CD4-positive, alpha-beta T cell (primary cell): ENCODE measurements at regions of chr7 and their contacts with region 1.

Region 1: DNA sequence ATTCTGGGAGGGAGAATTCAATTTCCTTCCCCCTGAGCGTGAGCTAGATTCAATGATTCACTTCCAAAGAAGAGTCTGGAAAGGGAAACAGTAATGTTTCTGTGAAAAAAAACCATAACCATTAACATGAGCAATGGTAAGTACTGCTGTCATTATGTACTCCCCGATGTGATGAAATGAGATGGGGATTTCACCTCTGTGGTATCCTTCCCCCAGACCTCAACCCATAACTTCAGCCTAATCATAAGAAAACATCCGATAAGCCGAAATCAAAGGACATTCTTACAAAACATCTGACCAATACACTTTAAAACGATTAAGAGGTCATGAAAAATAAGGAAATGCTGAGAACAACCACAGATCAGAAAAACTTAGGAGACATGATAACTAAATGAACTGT is 27.2 kb downstream of the EZH2 start:
- DNase-seq: peak in 2 of 14 experiments; percentile 58 to 68
- ATAC-seq: no peak
- H3K4me3 ChIP-seq: no peak overlapping the region
- H3K4me3 Mint-ChIP-seq: no peak overlapping the region
- H3K27ac ChIP-seq: no peak overlapping the region
- H3K27ac Mint-ChIP-seq: no peak overlapping the region
- H3K4me1 ChIP-seq: peaks cover 6% of the 10 kb centered on the region
- H3K4me1 Mint-ChIP-seq: peaks cover 17% of the 10 kb centered on the region
- H3K27me3 ChIP-seq: no peaks in the 10 kb centered on the region
- H3K27me3 Mint-ChIP-seq: no peaks in the 10 kb centered on the region
- CTCF ChIP-seq: no peak

Region 2: DNA sequence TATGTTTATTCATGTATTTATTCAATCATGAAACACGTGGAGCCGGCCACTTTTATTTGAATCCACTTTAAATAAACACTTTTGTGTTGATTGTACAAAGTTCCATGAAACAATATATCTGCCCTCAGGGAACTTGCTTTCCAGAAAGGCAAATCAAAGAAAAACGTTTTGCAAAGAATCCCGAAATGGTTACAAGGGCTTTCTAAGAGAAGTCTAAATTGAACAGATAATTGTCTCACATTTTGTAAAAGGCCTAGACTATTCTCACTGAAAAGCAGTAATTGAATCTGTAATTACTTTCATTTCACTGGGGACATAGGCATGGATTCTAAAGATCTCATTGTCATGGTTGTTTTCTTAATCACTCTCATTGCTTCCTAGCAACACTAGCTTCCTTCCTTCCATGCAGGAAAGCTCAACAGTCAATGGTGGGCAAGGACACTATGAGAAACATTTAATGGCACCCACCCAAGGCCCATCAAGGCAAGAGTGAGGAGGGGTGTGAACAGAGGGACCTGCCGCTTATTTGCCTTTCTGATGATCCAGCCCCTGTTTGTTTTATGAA is 888.8 kb before region 1 on chr7:
- CTCF ChIA-PET with region 1: no interaction called
- POLR2A ChIA-PET with region 1: no interaction called
- intact Hi-C with region 1: no loop called
- DNase-seq: no peak
- ATAC-seq: no peak
- H3K4me3 ChIP-seq: no peak overlapping the region
- H3K4me3 Mint-ChIP-seq: no peak overlapping the region
- H3K27ac ChIP-seq: no peak overlapping the region
- H3K27ac Mint-ChIP-seq: no peak overlapping the region
- H3K4me1 ChIP-seq: no peaks in the 10 kb centered on the region
- H3K4me1 Mint-ChIP-seq: no peaks in the 10 kb centered on the region
- H3K27me3 ChIP-seq: no peaks in the 10 kb centered on the region
- H3K27me3 Mint-ChIP-seq: peaks cover 6% of the 10 kb centered on the region
- CTCF ChIP-seq: no peak

Region 3: GRCh38 chr7:148575640-148576411 is 281.1 kb before region 1 on chr7:
- CTCF ChIA-PET with region 1: interaction called, 3 read pairs
- POLR2A ChIA-PET with region 1: no interaction called
- intact Hi-C with region 1: loop called in 1 of 2 experiments (anchors 5 kb)
- DNase-seq: peak; percentile 50 to 79 (median 64)
- ATAC-seq: peak; percentile 81
- H3K4me3 ChIP-seq: no peak overlapping the region
- H3K4me3 Mint-ChIP-seq: no peak overlapping the region
- H3K27ac ChIP-seq: no peak overlapping the region
- H3K27ac Mint-ChIP-seq: no peak overlapping the region
- H3K4me1 ChIP-seq: peaks cover 5% of the 10 kb centered on the region
- H3K4me1 Mint-ChIP-seq: peaks cover 4% of the 10 kb centered on the region
- H3K27me3 ChIP-seq: no peaks in the 10 kb centered on the region
- H3K27me3 Mint-ChIP-seq: no peaks in the 10 kb centered on the region
- CTCF ChIP-seq: peak; percentile 82

Region 4: GRCh38 chr7:148800677-148801076 is 56.2 kb before region 1 on chr7:
- CTCF ChIA-PET with region 1: no interaction called
- POLR2A ChIA-PET with region 1: no interaction called
- intact Hi-C with region 1: no loop called
- DNase-seq: no peak
- ATAC-seq: no peak
- H3K4me3 ChIP-seq: no peak overlapping the region
- H3K4me3 Mint-ChIP-seq: no peak overlapping the region
- H3K27ac ChIP-seq: no peak overlapping the region
- H3K27ac Mint-ChIP-seq: no peak overlapping the region
- H3K4me1 ChIP-seq: no peaks in the 10 kb centered on the region
- H3K4me1 Mint-ChIP-seq: no peaks in the 10 kb centered on the region
- H3K27me3 ChIP-seq: no peaks in the 10 kb centered on the region
- H3K27me3 Mint-ChIP-seq: no peaks in the 10 kb centered on the region
- CTCF ChIP-seq: no peak

Region 5: DNA sequence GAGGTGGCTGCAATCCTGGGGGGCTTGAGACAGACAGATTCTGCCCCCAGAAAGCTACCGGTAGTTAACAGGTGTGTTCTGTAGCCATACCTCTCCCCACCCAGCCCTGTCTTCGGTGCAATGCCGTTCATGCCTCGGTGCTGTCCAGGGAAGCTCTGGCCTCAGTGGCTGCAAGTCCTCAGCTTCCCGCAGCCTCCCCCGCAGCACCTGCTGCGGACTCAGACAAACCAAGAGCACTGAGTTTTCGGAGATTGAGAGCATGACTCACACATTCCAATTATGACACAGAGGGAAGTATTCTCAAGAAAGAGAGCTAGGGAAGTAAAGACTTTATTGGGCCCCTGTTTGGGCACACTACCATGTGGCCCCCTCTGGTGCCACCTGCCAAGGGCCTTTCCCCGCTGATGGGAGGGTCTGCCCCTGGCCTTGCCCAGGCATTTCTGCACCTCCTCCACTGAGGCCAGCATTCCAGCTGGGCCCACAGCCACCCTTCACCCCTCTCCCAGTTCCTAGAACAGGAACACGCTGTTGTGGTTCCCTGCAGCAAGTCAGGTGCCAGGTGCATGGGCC is 57.4 kb after region 1 on chr7:
- CTCF ChIA-PET with region 1: interaction called, 8 read pairs
- POLR2A ChIA-PET with region 1: no interaction called
- intact Hi-C with region 1: loop called in 1 of 2 experiments (anchors 2 kb)
- DNase-seq: peak in 3 of 14 experiments; percentile 17 to 34 (median 27)
- ATAC-seq: peak; percentile 19
- H3K4me3 ChIP-seq: no peak overlapping the region
- H3K4me3 Mint-ChIP-seq: peak overlapping the region; percentile 51
- H3K27ac ChIP-seq: peak overlapping the region; percentile 18 to 57
- H3K27ac Mint-ChIP-seq: peak overlapping the region; percentile 79
- H3K4me1 ChIP-seq: peaks cover 49% of the 10 kb centered on the region
- H3K4me1 Mint-ChIP-seq: peaks cover 65% of the 10 kb centered on the region
- H3K27me3 ChIP-seq: no peaks in the 10 kb centered on the region
- H3K27me3 Mint-ChIP-seq: no peaks in the 10 kb centered on the region
- CTCF ChIP-seq: no peak

Region 6: DNA sequence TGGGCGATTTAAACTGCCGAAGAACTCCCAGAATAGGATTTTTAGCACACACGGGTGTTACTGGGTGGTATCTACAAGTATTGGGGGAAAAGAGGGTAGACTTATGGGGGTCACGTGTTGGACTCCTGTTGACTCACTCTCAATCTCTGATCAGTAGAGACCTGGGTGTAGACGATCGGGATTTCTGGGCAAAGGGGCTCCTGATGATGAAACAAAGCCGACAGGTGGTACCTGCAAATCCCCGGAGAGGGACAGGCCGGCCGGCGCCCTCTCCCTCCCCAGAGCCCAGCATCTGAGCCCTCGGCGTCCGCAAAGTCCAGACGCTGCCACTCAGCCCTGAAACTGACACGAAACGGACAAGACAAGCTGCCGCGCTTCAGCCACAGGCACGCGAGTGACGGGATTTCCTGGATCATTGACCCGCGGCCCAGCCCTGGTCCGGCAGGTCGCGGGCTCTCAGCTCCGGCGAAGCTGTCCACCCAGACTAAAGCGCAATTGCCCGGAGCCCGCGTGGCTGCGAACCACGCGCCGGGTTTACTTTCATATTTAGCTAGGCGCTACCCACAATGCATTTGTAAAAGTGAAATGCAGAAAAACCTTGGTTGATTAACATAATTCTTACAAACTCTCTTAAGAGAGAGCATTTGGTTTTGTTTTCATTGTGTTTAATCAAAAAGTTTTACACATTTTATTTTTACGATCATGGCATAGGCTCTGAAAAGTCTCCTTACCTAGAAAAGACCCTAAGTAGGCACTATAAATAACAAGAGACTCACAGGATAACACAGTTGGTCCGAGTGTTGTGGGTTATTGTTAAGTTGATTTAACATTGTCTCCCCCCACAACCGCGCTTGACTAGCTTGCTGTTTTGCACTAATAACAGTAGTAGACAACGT is 84.1 kb after region 1 on chr7:
- CTCF ChIA-PET with region 1: interaction called, 28 read pairs
- POLR2A ChIA-PET with region 1: interaction called, 18 read pairs
- intact Hi-C with region 1: loop called (anchors 1 to 5 kb)
- DNase-seq: peak; percentile 37 to 87 (median 57)
- ATAC-seq: peak; percentile 69
- H3K4me3 ChIP-seq: peak overlapping the region; percentile 89
- H3K4me3 Mint-ChIP-seq: peak overlapping the region; percentile 97
- H3K27ac ChIP-seq: peak overlapping the region; percentile 87 to 88
- H3K27ac Mint-ChIP-seq: peak overlapping the region; percentile 98
- H3K4me1 ChIP-seq: peaks cover 7% of the 10 kb centered on the region
- H3K4me1 Mint-ChIP-seq: peaks cover 27% of the 10 kb centered on the region
- H3K27me3 ChIP-seq: no peaks in the 10 kb centered on the region
- H3K27me3 Mint-ChIP-seq: no peaks in the 10 kb centered on the region
- CTCF ChIP-seq: no peak

Region 7: GRCh38 chr7:149050941-149051340 is 194.1 kb after region 1 on chr7:
- CTCF ChIA-PET with region 1: no interaction called
- POLR2A ChIA-PET with region 1: no interaction called
- intact Hi-C with region 1: no loop called
- DNase-seq: no peak
- ATAC-seq: no peak
- H3K4me3 ChIP-seq: no peak overlapping the region
- H3K4me3 Mint-ChIP-seq: no peak overlapping the region
- H3K27ac ChIP-seq: no peak overlapping the region
- H3K27ac Mint-ChIP-seq: no peak overlapping the region
- H3K4me1 ChIP-seq: no peaks in the 10 kb centered on the region
- H3K4me1 Mint-ChIP-seq: no peaks in the 10 kb centered on the region
- H3K27me3 ChIP-seq: no peaks in the 10 kb centered on the region
- H3K27me3 Mint-ChIP-seq: no peaks in the 10 kb centered on the region
- CTCF ChIP-seq: no peak